Heart right ventricle (tissue), 16 donors: ENCODE measurements at regions of chr17 and their contacts with region 1.

Region 1: GRCh38 chr17:75632863-75633485 is at the start of gene SMIM5:
- DNase-seq: peak; percentile 86 to 91
- ATAC-seq: peak; percentile 66 to 84 (median 78)
- H3K4me3 ChIP-seq: peak within 1 kb of the TSS in 8 of 10 donors; percentile 13 to 39 (median 27)
- H3K27ac ChIP-seq: peak within 1 kb of the TSS; percentile 57 to 94 (median 89)
- H3K4me1 ChIP-seq: peaks cover 14 to 59% (median 45%) of the 10 kb centered on the region in 9 donors
- H3K27me3 ChIP-seq: no peaks in the 10 kb centered on the region
- CTCF ChIP-seq: peak; percentile 92 to 99 (median 98)
- total RNA-seq, gene SMIM5: 1.9 to 14.2 (median 6.5) TPM

Region 2: GRCh38 chr17:75218131-75218530 is 414.8 kb before region 1 on chr17:
- intact Hi-C with region 1: no loop called
- DNase-seq: no peak
- ATAC-seq: no peak
- H3K4me3 ChIP-seq: no peak overlapping the region
- H3K27ac ChIP-seq: no peak overlapping the region
- H3K4me1 ChIP-seq: no peaks in the 10 kb centered on the region
- H3K27me3 ChIP-seq: no peaks in the 10 kb centered on the region
- CTCF ChIP-seq: no peak

Region 3: GRCh38 chr17:75565068-75565467 is 67.9 kb before region 1 on chr17:
- intact Hi-C with region 1: no loop called
- DNase-seq: no peak
- ATAC-seq: no peak
- H3K4me3 ChIP-seq: no peak overlapping the region
- H3K27ac ChIP-seq: no peak overlapping the region
- H3K4me1 ChIP-seq: no peaks in the 10 kb centered on the region
- H3K27me3 ChIP-seq: no peaks in the 10 kb centered on the region
- CTCF ChIP-seq: no peak

Region 4: GRCh38 chr17:75652915-75653549 is 20.1 kb after region 1 on chr17:
- intact Hi-C with region 1: loop called in 1 of 10 experiments (anchors 1 kb)
- DNase-seq: no peak
- ATAC-seq: peak in 6 of 8 donors; percentile 42 to 73 (median 64)
- H3K4me3 ChIP-seq: no peak overlapping the region
- H3K27ac ChIP-seq: no peak overlapping the region
- H3K4me1 ChIP-seq: peaks cover 0 to 15% (median 0%) of the 10 kb centered on the region in 9 donors
- H3K27me3 ChIP-seq: no peaks in the 10 kb centered on the region
- CTCF ChIP-seq: peak; percentile 39 to 74 (median 66)

Region 5: GRCh38 chr17:75749545-75750389 is 116.8 kb after region 1 on chr17:
- intact Hi-C with region 1: loop called (anchors 1 to 5 kb)
- DNase-seq: peak; percentile 86 to 88
- ATAC-seq: peak; percentile 68 to 88 (median 78)
- H3K4me3 ChIP-seq: no peak overlapping the region
- H3K27ac ChIP-seq: no peak overlapping the region
- H3K4me1 ChIP-seq: peaks cover 7 to 36% (median 26%) of the 10 kb centered on the region in 9 donors
- H3K27me3 ChIP-seq: no peaks in the 10 kb centered on the region
- CTCF ChIP-seq: peak; percentile 95 to 98 (median 96)

Region 6: DNA sequence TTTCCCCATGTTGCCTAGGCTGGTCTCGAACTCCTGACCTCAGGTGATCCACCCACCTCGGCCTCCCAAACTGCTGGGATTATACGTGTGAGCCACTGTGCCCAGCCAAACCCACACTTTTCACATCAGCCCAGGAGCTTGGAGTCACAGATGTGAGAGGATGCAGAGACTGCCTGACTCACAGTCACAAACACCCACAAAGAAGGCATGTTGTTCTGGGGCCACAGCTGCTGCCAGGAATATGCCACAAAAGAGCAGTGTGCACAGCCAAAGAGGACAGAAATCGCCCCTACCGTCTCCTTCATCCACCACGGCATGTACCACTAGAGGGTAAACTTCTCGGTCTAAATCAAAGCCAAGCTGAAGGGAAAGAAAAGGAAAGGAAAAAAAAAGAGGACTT is 533.2 kb after region 1 on chr17:
- intact Hi-C with region 1: no loop called
- DNase-seq: no peak
- ATAC-seq: no peak
- H3K4me3 ChIP-seq: no peak overlapping the region
- H3K27ac ChIP-seq: no peak overlapping the region
- H3K4me1 ChIP-seq: no peaks in the 10 kb centered on the region
- H3K27me3 ChIP-seq: no peaks in the 10 kb centered on the region
- CTCF ChIP-seq: no peak